ENCODE measurements at regions of chr6 and their contacts with region 1.

Region 1: GRCh38 chr6:108492131-108492766 is 68.5 kb upstream of the FOXO3 start:
- H3K4me3 ChIP-seq: no peak overlapping the region
- H3K27ac ChIP-seq: no peak overlapping the region
- H3K4me1 ChIP-seq: no peaks in the 10 kb centered on the region
- CTCF ChIP-seq: no peak; the same call in 1 of the 2 replicates

Region 2: DNA sequence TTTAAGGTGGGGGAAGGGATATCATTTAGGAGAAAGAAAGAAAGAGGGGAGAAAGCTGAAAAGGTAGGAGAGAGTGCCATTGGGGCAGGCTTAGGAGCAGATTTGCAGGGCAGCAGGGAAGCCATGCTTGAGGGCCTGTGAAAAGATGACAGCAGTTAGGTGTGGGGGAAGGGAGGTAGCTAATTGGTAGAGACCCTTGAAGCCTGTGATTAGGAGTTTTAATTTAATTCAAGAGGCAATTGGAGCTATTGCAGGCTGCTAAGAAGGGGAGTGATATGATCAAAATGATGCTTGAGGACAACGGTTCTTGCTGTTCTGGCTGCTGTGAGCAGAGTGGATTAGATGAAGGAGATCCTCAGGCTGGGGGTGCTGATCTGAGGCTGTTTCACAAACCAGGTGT is 509.8 kb before region 1 on chr6:
- CTCF ChIA-PET with region 1: interaction called, 20 read pairs
- POLR2A ChIA-PET with region 1: no interaction called
- H3K4me3 ChIP-seq: no peak overlapping the region
- H3K27ac ChIP-seq: no peak overlapping the region
- H3K4me1 ChIP-seq: no peaks in the 10 kb centered on the region
- CTCF ChIP-seq: no peak

Region 3: DNA sequence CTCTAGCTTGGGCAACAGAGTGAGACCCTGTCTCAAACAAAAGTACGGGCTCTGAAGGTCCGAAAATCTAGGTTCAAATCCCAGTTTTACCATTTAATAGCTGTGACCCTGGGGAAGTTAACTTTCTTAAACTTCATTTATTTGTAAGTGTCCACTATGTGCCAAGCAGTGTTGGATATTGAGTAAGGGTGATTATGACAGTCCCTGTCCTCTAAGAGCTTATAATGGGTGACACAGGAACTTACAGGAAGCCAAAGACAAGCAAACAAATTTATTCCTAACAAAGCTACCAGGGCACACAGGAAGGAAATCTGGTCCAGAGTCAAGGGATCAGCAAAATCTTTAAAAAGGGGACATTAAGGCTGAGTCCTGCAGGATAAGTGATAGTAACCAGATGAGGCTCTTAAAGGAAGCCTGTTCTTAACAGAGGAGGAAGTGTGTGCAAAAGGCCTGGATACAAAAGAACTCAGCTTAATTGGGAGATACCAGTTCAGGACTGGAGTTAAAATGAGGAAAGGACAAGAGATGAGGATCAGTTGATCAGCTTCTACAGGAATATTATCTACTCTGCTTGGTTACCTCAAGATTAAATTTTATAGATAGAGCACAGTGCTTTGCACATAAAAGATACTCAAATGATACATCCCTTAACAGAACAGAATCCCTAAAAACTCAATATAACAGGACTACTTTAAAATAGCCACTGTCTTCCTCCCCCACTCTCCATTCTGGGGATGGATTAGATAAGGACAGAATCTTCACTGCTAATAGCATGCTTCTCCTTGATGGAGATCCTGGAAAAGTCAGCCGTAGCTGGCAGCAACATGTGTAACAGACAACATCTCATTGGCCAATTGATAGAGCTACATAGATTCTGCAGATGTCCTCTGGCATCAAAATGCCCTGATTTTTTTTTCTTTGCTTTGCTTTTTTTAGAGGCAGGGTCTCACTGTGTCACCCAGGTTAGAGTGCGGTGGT is 237.5 kb before region 1 on chr6:
- CTCF ChIA-PET with region 1: interaction called, 12 read pairs
- POLR2A ChIA-PET with region 1: no interaction called
- H3K4me3 ChIP-seq: no peak overlapping the region
- H3K27ac ChIP-seq: no peak overlapping the region
- H3K4me1 ChIP-seq: 0 out of 2 replicates have a peak, but pooled peaks cover 2% of the 10 kb centered on the region
- CTCF ChIP-seq: no peak

Region 4: GRCh38 chr6:108468346-108468745 is 23.9 kb before region 1 on chr6:
- CTCF ChIA-PET with region 1: interaction called, 12 read pairs
- POLR2A ChIA-PET with region 1: no interaction called
- H3K4me3 ChIP-seq: no peak overlapping the region
- H3K27ac ChIP-seq: no peak overlapping the region
- H3K4me1 ChIP-seq: 0 out of 2 replicates have a peak, but pooled peaks cover 2% of the 10 kb centered on the region
- CTCF ChIP-seq: no peak

Region 5: DNA sequence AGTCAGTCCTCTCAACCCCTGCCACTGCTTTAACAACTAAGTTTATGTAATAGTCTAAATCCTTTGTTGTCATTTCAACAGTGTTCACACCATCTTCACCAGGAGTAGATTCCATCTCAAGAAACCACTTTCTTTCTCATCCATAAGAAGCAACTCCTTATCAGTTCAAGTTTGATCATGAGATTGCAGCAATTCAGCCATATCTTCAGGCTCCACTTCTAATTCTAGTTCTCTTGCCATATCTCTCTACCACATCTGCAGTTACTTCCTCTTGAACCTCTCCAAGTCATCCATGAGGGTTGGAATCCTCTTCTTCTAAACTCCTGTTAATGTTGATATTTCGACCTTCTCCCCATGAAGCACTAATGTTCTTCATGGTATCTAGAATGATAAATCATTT is 10.6 kb after region 1 on chr6:
- CTCF ChIA-PET with region 1: interaction called, 10 read pairs
- POLR2A ChIA-PET with region 1: no interaction called
- H3K4me3 ChIP-seq: no peak overlapping the region
- H3K27ac ChIP-seq: no peak overlapping the region
- H3K4me1 ChIP-seq: 0 out of 2 replicates have a peak, but pooled peaks cover 4% of the 10 kb centered on the region
- CTCF ChIP-seq: no peak

Region 6: DNA sequence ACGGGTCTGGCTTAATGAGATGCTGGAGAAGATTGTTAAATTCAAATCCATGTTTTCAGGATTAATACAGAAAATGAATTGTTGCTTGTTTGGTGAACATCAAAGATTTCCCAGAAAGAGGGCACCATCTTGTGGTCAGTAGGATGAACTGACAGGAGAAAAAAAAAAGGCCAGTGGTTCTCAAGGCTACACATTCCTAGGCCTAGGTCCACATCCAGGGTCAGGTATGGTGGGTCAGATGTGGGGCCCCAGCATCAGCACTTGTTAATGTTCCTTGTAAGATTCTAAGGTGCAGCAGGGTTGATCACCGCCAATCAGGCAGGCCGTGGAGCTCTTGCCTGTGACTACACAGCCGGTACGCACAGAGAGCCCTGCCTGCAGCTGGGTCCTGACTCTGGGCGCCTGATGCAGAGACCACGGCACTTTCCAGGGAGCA is 34.5 kb after region 1 on chr6:
- CTCF ChIA-PET with region 1: interaction called, 39 read pairs
- POLR2A ChIA-PET with region 1: no interaction called
- H3K4me3 ChIP-seq: no peak overlapping the region
- H3K27ac ChIP-seq: no peak overlapping the region
- H3K4me1 ChIP-seq: no peaks in the 10 kb centered on the region
- CTCF ChIP-seq: no peak; the same call in 1 of the 2 replicates

Measured in HEK293 (cell line).